ENCODE measurements at regions of chr17 and their contacts with region 1.

Region 1: DNA sequence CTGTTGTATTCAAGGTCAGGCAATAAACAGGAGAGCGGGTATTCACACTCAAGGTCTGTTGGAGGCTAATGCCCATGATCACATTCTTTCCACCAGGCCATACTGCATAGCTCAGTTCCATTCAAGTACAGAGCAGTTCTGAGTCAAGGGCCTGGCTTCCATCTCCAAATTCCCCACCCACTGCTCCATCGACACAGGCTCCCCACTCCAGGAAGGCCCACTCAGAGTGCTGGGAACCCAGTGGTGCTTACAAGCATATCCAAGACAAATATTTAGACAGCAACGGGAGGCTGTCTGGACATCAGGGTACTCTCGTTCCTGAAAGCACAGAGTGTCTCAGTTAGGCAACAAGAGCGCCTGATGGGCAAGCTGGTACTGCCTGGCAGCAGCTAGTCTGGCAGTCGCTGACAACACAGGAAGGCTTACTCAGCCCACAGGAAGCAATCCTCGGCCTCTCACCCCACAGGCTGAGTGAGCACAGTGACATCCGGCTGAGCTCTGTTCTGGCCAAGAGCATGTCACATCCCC is 40.9 kb downstream of the RFFL start:
- DNase-seq: peak; percentile 89 to 96
- H3K4me3 ChIP-seq: no peak overlapping the region
- H3K27ac ChIP-seq: peak overlapping the region; percentile 85 to 92
- H3K4me1 ChIP-seq: peaks cover 9 to 19% of the 10 kb centered on the region in 2 donors
- H3K27me3 ChIP-seq: no peaks in the 10 kb centered on the region
- CTCF ChIP-seq: peak in 2 of 3 experiments; percentile 37 to 45

Region 2: DNA sequence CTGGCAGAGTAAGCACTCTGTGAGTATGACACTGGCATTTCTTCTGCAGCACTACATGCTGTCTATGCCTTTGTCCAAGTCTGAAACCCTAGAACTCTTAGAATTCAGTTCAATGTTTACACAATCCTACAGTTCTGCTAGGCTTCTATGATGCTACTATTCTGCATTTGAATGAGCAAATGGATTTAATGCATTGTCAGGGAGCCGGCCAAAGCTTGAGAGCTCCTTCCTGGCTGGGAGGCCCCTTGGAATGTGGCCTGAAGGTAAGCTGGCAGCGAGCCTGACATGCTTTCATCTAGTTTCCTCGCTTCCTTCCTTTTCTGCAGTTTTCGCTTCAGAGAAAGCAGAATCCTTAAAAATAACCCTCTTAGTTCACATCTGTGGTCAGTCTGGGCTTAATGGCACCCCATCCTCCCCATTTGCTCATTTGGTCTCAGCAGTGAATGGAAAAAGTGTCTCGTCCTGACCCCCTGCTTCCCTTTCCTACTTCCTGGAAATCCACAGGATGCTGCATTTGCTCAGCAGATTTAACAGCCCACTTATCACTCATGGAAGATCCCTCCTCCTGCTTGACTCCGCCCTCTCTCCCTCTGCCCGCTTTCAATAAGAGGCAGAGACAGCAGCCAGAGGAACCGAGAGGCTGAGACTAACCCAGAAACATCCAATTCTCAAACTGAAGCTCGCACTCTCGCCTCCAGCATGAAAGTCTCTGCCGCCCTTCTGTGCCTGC is 767.8 kb before region 1 on chr17 and contains the start of gene CCL2:
- intact Hi-C with region 1: loop called (anchors 5 kb)
- DNase-seq: peak in 1 of 2 donors; percentile 86
- H3K4me3 ChIP-seq: peak within 1 kb of the TSS; percentile 46 to 56
- H3K27ac ChIP-seq: peak within 1 kb of the TSS; percentile 87 to 89
- H3K4me1 ChIP-seq: peaks cover 39 to 60% of the 10 kb centered on the region in 2 donors
- H3K27me3 ChIP-seq: no peaks in the 10 kb centered on the region
- CTCF ChIP-seq: no peak
- total RNA-seq, gene CCL2: 162 TPM

Region 3: GRCh38 chr17:34980681-34981537 is 41.7 kb before region 1 on chr17:
- intact Hi-C with region 1: loop called (anchors 1 kb)
- DNase-seq: peak in 1 of 2 donors; percentile 82
- H3K4me3 ChIP-seq: peak overlapping the region; percentile 96 to 97
- H3K27ac ChIP-seq: peak overlapping the region; percentile 99 to 100
- H3K4me1 ChIP-seq: peaks cover 0 to 22% of the 10 kb centered on the region in 2 donors
- H3K27me3 ChIP-seq: no peaks in the 10 kb centered on the region
- CTCF ChIP-seq: peak in 2 of 3 experiments; percentile 18 to 48

Region 4: DNA sequence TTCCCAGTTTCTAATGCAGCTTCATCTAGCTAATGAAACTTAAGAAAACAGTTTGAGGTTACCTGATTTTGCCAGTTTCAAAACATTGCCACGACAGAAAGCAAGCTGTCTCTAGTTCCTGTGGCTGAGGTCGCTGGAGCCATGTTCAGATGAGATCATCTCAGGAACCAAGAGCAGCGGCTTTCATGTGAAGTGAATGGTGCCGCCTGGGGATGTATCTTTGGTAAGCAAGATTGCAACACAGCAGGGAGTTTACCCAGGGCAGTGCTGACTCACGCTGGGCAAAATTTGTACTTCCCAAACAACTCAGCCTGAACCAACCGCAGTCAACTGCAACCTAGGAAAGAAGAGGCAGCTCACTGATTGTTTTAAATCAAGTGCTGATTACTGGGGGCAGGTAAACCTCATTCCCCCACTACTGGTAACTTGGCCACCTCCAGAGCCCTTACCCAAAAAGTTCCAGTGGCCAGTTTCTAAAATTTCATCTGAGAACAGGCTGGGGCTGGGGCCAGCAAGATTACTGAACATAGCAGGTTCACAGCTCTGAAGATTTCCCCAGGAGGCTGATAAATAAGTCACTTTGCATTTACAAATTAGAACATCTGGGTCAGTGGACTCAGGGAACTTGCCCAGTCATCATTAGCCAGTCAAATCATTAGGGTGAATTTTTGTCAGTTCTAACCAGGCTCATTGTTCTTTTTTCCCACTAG is 41.1 kb after region 1 on chr17 and contains the start of gene RFFL:
- intact Hi-C with region 1: loop called (anchors 1 kb)
- DNase-seq: peak; percentile 81 to 95
- H3K4me3 ChIP-seq: peak within 1 kb of the TSS in 1 of 2 donors; percentile 24
- H3K27ac ChIP-seq: peak within 1 kb of the TSS; percentile 68 to 83
- H3K4me1 ChIP-seq: peaks cover 0 to 8% of the 10 kb centered on the region in 2 donors
- H3K27me3 ChIP-seq: no peaks in the 10 kb centered on the region
- CTCF ChIP-seq: peak in 1 of 3 experiments; percentile 29
- total RNA-seq, gene RFFL: 20.0 TPM

Region 5: GRCh38 chr17:35141681-35142466 is 119.3 kb after region 1 on chr17 and contains the start of gene NLE1:
- intact Hi-C with region 1: no loop called
- DNase-seq: peak in 1 of 2 donors; percentile 87
- H3K4me3 ChIP-seq: peak within 1 kb of the TSS; percentile 65 to 94
- H3K27ac ChIP-seq: no peak within 1 kb of the TSS
- H3K4me1 ChIP-seq: peaks cover 8 to 10% of the 10 kb centered on the region in 2 donors
- H3K27me3 ChIP-seq: no peaks in the 10 kb centered on the region
- CTCF ChIP-seq: peak; percentile 85 to 98 (median 96)
- total RNA-seq, gene NLE1: 3.8 TPM